GM12878 (cell line): ENCODE measurements at regions of chr6 and their contacts with region 1.

Region 1: DNA sequence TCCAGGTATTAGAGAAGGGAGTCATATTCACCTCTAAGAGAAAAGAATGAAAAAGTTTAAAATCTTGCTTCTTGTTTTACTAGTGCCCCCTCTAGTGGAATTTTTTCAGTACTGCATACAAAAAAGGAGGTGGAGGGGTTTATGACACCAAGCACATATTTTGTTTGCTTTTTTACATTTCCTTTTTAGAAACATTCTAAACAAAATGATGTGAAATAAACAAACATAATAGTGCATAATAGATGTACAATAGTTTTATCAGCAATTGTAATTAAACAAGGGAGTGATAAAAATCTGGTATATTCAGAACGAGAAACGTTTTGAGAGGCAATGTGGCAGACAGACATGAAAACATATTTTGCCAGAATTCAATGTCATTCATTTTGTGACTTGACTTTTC is 111.0 kb upstream of the TFAP2D start:
- DNase-seq: no peak
- ATAC-seq: 0 out of 3 replicates have a peak, but pooled peaks have one; percentile 19
- H3K4me3 ChIP-seq: no peak overlapping the region
- H3K27ac ChIP-seq: no peak overlapping the region
- H3K4me1 ChIP-seq: no peaks in the 10 kb centered on the region
- H3K27me3 ChIP-seq: no peaks in the 10 kb centered on the region
- CTCF ChIP-seq: peak; percentile 57 to 68 (median 66)
- EP300 ChIP-seq: no peak
- POLR2A ChIP-seq: no peak
- RAD21 ChIP-seq: peak; percentile 60

Region 2: DNA sequence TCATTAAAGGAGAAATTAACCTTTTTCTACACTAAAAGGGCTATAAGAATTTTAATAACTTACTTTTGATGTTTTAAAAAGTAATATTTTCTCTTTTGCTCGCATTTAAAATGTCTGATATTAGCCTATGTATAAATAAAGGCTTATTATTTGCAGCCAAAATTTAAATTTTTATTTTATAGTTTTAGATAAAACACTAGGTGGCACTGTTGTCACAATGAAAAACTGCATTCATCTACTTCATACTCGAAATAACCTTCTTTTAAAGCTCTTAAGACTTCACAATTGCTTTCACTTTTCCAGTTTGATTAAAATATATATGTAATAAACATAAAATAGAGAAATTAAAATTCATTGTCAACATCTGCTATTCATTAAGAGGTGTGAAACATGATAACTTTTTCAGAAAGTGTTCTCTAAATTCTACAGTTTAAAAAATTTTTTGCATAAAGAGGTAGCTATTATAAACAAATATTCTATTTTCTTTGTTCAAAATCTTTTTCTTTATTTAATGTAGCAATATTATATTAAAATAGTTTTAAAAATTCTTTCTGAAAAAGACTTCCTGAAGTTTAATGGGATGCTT is 473.8 kb before region 1 on chr6:
- CTCF ChIA-PET with region 1: interaction called, 24 read pairs
- POLR2A ChIA-PET with region 1: no interaction called
- RAD21 ChIA-PET with region 1: interaction called, 6 read pairs
- SMC1A ChIA-PET with region 1: interaction called, 4 read pairs
- in situ Hi-C with region 1: loop called (anchors 5 kb)
- intact Hi-C with region 1: loop called (anchors 2 kb)
- DNase-seq: no peak
- ATAC-seq: no peak
- H3K4me3 ChIP-seq: no peak overlapping the region
- H3K27ac ChIP-seq: no peak overlapping the region
- H3K4me1 ChIP-seq: no peaks in the 10 kb centered on the region
- H3K27me3 ChIP-seq: no peaks in the 10 kb centered on the region
- CTCF ChIP-seq: peak in 2 of 3 experiments; percentile 22 to 35; a peak in 2 of 6 replicates
- EP300 ChIP-seq: no peak
- POLR2A ChIP-seq: no peak
- RAD21 ChIP-seq: peak; percentile 47

Region 3: DNA sequence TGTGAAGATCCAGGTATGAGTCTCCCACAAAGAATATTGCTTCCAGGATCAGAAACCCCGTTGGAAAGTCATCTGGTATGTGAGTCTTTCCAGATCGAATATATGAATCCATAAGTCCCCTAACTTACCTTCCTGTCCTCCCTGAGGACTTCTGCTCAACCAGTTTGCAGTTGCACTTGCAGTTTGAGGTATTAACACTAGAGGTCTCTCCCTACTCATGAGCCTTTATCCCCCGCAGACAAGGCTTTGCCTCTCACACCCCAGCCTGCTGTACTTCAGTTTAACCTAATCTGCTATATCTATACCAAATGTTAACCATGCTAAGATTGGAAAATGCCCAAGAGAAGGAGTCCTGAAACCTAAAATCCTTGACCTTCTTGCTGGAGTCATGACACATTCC is 417.3 kb before region 1 on chr6:
- CTCF ChIA-PET with region 1: interaction called, 4 read pairs
- POLR2A ChIA-PET with region 1: no interaction called
- RAD21 ChIA-PET with region 1: no interaction called
- SMC1A ChIA-PET with region 1: no interaction called
- in situ Hi-C with region 1: no loop called
- intact Hi-C with region 1: loop called (anchors 1 kb)
- DNase-seq: no peak
- ATAC-seq: peak; percentile 72
- H3K4me3 ChIP-seq: no peak overlapping the region
- H3K27ac ChIP-seq: no peak overlapping the region
- H3K4me1 ChIP-seq: no peaks in the 10 kb centered on the region
- H3K27me3 ChIP-seq: no peaks in the 10 kb centered on the region
- CTCF ChIP-seq: peak; percentile 35 to 60 (median 40); a peak in 4 of 6 replicates
- EP300 ChIP-seq: no peak
- POLR2A ChIP-seq: no peak
- RAD21 ChIP-seq: peak; percentile 34

Region 4: DNA sequence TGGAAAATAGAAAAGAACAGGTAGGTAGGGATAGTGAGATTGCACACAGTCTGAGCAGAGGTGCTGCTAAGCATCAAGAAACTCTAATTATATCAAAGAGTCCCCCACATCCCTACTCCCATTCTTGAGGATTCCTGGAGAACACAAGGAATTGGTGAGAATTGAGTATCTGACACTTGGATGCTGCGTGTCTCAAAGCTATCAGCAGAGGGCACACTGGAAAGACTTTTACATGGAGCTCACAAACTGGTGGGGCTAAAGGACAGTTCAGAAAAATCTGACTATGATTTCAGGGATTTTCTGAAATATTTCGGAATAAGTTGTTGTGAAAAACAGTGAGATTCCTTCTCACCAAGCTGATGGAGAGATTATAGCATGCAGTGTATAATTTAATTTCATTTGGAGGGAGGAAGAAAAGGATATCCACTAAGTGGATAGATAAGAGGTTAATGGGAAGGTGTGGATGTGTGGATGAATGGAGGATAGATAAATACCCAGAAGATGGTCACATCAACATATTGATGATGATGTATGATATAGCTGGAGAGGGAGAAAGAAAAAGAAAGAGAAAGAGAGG is 337.2 kb before region 1 on chr6:
- CTCF ChIA-PET with region 1: interaction called, 33 read pairs
- POLR2A ChIA-PET with region 1: no interaction called
- RAD21 ChIA-PET with region 1: no interaction called
- SMC1A ChIA-PET with region 1: interaction called, 8 read pairs
- in situ Hi-C with region 1: no loop called
- intact Hi-C with region 1: loop called (anchors 1 kb)
- DNase-seq: no peak
- ATAC-seq: peak; percentile 72
- H3K4me3 ChIP-seq: no peak overlapping the region
- H3K27ac ChIP-seq: no peak overlapping the region
- H3K4me1 ChIP-seq: no peaks in the 10 kb centered on the region
- H3K27me3 ChIP-seq: no peaks in the 10 kb centered on the region
- CTCF ChIP-seq: peak in 2 of 3 experiments; percentile 20 to 37; a peak in 3 of 6 replicates
- EP300 ChIP-seq: no peak
- POLR2A ChIP-seq: no peak
- RAD21 ChIP-seq: peak; percentile 9; the same call in 1 of the 2 replicates

Region 5: DNA sequence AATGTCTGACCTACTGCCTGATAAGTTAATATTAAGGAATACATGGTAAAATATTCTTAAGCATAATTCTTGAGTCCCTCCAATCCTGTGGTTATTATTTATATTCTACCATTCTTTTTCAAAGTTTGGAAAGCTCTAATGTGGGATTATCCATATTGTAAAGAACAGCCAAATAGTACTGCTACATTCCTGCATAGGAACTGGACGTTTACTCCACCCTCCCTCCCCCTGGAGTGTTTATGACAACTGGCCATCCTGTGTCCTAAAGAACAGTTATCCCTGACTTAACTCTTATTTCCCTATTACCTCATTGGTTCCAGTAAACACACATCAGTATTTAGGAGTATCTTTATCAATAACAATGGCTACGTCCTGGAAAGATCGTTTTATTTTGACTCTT is 197.6 kb before region 1 on chr6:
- CTCF ChIA-PET with region 1: no interaction called
- POLR2A ChIA-PET with region 1: no interaction called
- RAD21 ChIA-PET with region 1: no interaction called
- SMC1A ChIA-PET with region 1: no interaction called
- in situ Hi-C with region 1: no loop called
- intact Hi-C with region 1: no loop called
- DNase-seq: no peak
- ATAC-seq: no peak
- H3K4me3 ChIP-seq: no peak overlapping the region
- H3K27ac ChIP-seq: no peak overlapping the region
- H3K4me1 ChIP-seq: no peaks in the 10 kb centered on the region
- H3K27me3 ChIP-seq: no peaks in the 10 kb centered on the region
- CTCF ChIP-seq: no peak
- EP300 ChIP-seq: no peak
- POLR2A ChIP-seq: no peak
- RAD21 ChIP-seq: no peak

Region 6: GRCh38 chr6:50663806-50664205 is 61.5 kb after region 1 on chr6:
- CTCF ChIA-PET with region 1: no interaction called
- POLR2A ChIA-PET with region 1: no interaction called
- RAD21 ChIA-PET with region 1: no interaction called
- SMC1A ChIA-PET with region 1: no interaction called
- in situ Hi-C with region 1: no loop called
- intact Hi-C with region 1: no loop called
- DNase-seq: no peak
- ATAC-seq: no peak
- H3K4me3 ChIP-seq: no peak overlapping the region
- H3K27ac ChIP-seq: no peak overlapping the region
- H3K4me1 ChIP-seq: no peaks in the 10 kb centered on the region
- H3K27me3 ChIP-seq: no peaks in the 10 kb centered on the region
- CTCF ChIP-seq: no peak
- EP300 ChIP-seq: no peak
- POLR2A ChIP-seq: no peak
- RAD21 ChIP-seq: no peak